MCF 10A (cell line): ENCODE measurements at regions of chr7 and their contacts with region 1.

Region 1: DNA sequence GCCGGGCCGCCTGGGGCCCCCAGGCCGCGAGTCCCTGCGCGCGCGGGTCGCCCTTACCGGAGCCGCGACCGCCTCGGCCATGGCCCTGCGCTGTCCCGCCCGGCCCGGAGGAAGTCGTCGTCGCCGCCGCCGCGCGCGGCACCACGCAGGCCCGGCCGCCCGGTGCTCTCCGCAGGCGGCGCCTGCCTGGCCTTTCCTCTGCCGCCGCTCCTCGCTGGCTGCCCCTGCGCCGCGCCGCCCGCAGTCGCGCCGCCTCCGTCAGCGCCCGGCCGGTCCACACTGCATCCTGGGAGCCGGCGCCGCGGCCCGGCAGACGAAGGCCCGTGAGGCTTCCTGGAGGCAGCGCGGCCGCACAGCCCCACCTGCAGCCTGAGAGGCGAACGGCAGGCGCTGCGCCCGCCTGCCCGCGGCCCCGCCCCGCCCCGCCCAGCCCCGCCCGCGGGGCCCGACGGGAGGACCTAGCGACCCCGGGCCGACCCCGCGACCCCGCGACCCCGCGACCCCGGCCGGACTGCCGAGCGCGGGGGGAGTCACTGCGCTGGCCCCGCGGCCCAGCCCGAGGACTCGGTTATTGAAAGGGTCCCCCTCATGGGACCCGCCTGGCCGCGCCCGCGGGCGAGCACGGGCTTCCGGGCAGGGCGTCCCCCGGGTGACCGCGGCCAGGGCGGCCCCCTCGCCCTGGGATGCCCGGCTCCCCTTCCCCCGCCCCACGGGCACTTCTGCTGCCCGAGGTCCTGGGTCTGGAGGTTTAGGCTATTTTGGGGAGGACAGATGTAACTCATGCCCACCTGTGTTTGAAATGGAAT is at the start of gene ZNF746:
- DNase-seq: peak; percentile 82
- H3K4me3 Mint-ChIP-seq: peak within 1 kb of the TSS; percentile 94
- H3K27ac Mint-ChIP-seq: peak within 1 kb of the TSS; percentile 92
- H3K4me1 Mint-ChIP-seq: peaks cover 16% of the 10 kb centered on the region
- H3K27me3 Mint-ChIP-seq: no peaks in the 10 kb centered on the region
- CTCF ChIP-seq: peak; percentile 67
- total RNA-seq, gene ZNF746: 22.0 and 23.7 TPM in 2 replicates

Region 2: GRCh38 chr7:148914208-148914777 is 583.4 kb before region 1 on chr7:
- CTCF ChIA-PET with region 1: no interaction called
- POLR2A ChIA-PET with region 1: no interaction called
- intact Hi-C with region 1: loop called (anchors 10 kb)
- DNase-seq: peak; percentile 71
- H3K4me3 Mint-ChIP-seq: no peak overlapping the region
- H3K27ac Mint-ChIP-seq: no peak overlapping the region
- H3K4me1 Mint-ChIP-seq: peaks cover 10% of the 10 kb centered on the region
- H3K27me3 Mint-ChIP-seq: peaks cover 6% of the 10 kb centered on the region
- CTCF ChIP-seq: no peak

Region 3: DNA sequence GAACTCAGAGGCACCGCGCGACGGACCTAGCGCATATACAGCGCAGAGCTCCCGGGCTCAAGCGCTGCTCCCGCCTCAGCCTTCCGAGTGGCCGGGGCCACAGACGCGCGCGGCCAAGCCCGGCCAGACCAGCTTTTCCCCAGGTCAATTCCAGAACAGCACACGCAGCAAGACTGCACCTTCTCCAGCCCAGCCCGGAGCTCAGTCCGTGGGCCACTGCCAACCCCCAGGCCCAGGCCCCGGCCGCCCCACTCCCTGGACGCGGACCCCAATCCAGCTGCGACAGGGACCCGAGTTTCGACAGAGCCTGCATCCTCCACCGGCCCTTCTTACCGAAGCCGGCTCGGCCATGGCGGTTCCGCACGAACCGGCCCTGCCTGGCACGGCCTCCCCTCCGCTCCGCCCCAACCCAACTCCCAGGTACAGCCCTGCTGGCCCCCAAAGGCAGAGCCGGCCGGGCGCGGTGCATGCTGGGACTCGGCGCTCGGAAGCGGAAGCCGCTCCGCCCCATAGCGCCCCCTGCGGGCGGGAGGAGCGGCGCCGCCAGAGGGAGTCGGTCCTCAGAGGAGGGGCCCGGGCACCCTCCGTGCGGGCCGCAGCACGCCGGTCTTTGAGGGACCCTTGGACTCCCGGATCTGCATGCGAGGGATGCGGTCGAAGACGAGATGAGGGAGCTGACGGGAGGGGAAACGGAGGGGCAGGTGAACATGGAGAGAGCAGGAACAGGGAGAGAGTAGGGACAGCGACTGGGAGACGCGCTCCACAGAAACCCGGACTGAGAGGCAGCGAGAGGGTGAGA is 371.6 kb before region 1 on chr7 and contains the start of gene ZNF425:
- CTCF ChIA-PET with region 1: no interaction called
- POLR2A ChIA-PET with region 1: no interaction called
- intact Hi-C with region 1: loop called (anchors 2 kb)
- DNase-seq: peak; percentile 93
- H3K4me3 Mint-ChIP-seq: peak within 1 kb of the TSS; percentile 97
- H3K27ac Mint-ChIP-seq: peak within 1 kb of the TSS; percentile 99
- H3K4me1 Mint-ChIP-seq: peaks cover 18% of the 10 kb centered on the region
- H3K27me3 Mint-ChIP-seq: no peaks in the 10 kb centered on the region
- CTCF ChIP-seq: peak; percentile 89
- total RNA-seq, gene ZNF425: 2.6 and 3.3 TPM in 2 replicates

Region 4: GRCh38 chr7:149261829-149262617 is 235.6 kb before region 1 on chr7 and contains the start of gene ZNF783:
- CTCF ChIA-PET with region 1: interaction called, 3 read pairs
- POLR2A ChIA-PET with region 1: interaction called, 4 read pairs
- intact Hi-C with region 1: loop called (anchors 5 kb)
- DNase-seq: peak; percentile 81
- H3K4me3 Mint-ChIP-seq: peak within 1 kb of the TSS; percentile 78
- H3K27ac Mint-ChIP-seq: peak within 1 kb of the TSS; percentile 93
- H3K4me1 Mint-ChIP-seq: peaks cover 17% of the 10 kb centered on the region
- H3K27me3 Mint-ChIP-seq: no peaks in the 10 kb centered on the region
- CTCF ChIP-seq: peak; percentile 82
- total RNA-seq, gene ZNF783: 39.5 and 49.0 TPM in 2 replicates

Region 5: DNA sequence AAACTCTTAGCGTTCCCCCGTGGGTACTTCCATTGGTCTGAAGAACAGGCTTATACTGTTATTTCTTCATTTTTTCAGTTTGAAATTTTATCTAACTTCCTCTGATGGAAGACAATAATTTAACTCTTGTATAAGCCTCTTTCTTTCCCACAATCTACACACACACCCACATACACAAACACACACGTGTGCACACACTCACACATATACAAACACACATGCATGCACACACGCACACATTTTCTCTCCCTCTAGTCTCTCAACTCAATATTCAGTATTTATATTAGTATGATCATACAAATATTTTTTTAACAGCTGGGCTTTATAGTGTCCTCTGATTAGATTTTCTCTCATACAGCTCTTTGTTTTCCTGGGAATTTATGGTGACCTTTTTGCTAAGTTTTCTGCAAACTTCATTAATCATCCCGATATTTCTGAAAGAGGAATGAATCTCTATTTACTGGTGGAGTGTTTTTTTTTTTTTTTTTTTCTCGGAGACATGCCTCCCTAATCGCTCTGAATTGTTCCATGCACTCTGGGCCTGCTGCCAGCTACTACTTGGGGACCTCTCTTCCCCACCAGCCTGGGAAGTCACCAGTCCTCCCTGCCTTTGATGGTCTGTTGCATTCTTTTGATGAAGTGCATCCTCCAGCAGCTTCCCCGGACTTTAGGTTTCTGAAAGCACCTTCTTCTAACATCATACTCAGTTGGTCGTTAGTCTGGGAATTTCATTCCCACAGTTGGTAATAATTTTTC is 112.3 kb before region 1 on chr7:
- CTCF ChIA-PET with region 1: no interaction called
- POLR2A ChIA-PET with region 1: no interaction called
- intact Hi-C with region 1: no loop called
- DNase-seq: no peak
- H3K4me3 Mint-ChIP-seq: no peak overlapping the region
- H3K27ac Mint-ChIP-seq: no peak overlapping the region
- H3K4me1 Mint-ChIP-seq: no peaks in the 10 kb centered on the region
- H3K27me3 Mint-ChIP-seq: peaks cover 17% of the 10 kb centered on the region
- CTCF ChIP-seq: no peak

Region 6: DNA sequence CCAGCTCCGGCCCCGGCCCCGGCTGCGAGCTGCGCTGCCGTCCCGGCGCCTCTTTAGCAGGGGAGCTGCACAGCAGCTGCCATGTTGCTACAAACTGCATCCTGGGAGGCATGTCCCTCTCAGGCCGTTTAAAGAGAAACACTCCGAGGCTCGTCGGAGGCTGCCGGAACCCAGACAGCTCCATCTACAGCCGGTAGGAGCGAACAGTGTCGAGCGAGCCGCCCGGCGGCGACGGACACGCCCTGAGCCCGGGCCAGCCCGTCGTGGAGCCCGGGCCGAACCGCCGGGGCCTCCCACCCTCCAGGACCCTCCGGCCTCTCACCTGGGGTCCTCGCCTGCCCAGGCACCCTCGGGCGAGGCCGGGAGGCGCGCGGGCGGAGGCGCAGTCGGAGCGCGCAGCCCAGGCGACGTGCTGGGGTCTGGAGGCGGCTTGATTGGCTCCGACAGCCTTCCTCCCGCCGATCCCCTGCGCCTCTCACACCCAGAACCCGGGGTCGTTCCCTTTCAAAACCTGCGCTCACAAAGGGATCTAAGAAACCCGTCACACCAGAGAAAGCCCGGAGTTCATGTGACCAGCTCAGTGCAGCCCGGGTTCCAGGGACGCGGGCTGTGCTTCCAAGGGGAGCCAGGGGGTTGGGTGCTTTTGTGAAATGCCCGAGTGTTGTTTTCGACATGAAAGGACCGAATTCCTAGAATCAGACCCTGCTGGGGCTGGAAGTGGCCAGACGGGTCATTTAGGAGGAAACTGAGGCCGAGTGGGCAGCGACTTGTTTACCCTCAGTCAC is 37.0 kb before region 1 on chr7 and contains the start of gene ZNF777:
- CTCF ChIA-PET with region 1: interaction called, 7 read pairs
- POLR2A ChIA-PET with region 1: interaction called, 6 read pairs
- intact Hi-C with region 1: loop called (anchors 2 kb)
- DNase-seq: peak; percentile 84
- H3K4me3 Mint-ChIP-seq: peak within 1 kb of the TSS; percentile 72
- H3K27ac Mint-ChIP-seq: no peak within 1 kb of the TSS
- H3K4me1 Mint-ChIP-seq: peaks cover 16% of the 10 kb centered on the region
- H3K27me3 Mint-ChIP-seq: no peaks in the 10 kb centered on the region
- CTCF ChIP-seq: peak; percentile 36
- total RNA-seq, gene ZNF777: 19.5 and 22.9 TPM in 2 replicates

Region 7: GRCh38 chr7:149598721-149599306 is 101.2 kb after region 1 on chr7:
- CTCF ChIA-PET with region 1: no interaction called
- POLR2A ChIA-PET with region 1: no interaction called
- intact Hi-C with region 1: loop called (anchors 5 kb)
- DNase-seq: peak; percentile 56
- H3K4me3 Mint-ChIP-seq: no peak overlapping the region
- H3K27ac Mint-ChIP-seq: peak overlapping the region; percentile 73
- H3K4me1 Mint-ChIP-seq: peaks cover 5% of the 10 kb centered on the region
- H3K27me3 Mint-ChIP-seq: no peaks in the 10 kb centered on the region
- CTCF ChIP-seq: peak; percentile 47